ENCODE measurements at regions of chr16 and their contacts with region 1.

Region 1: GRCh38 chr16:11977376-11978041 is 975 bp downstream of the SNX29 start:
- DNase-seq: peak; percentile 71
- ATAC-seq: peak; percentile 72
- H3K4me3 ChIP-seq: peak overlapping the region; percentile 96
- H3K27ac ChIP-seq: peak overlapping the region; percentile 35; the same call in 1 of the 2 replicates
- H3K4me1 ChIP-seq: peaks cover 5% of the 10 kb centered on the region; the same call in 1 of the 2 replicates
- H3K27me3 ChIP-seq: no peaks in the 10 kb centered on the region
- CTCF ChIP-seq: no peak

Region 2: GRCh38 chr16:11915644-11916523 is 61.6 kb before region 1 on chr16 and contains the start of gene GSPT1:
- CTCF ChIA-PET with region 1: interaction called, 3 read pairs
- POLR2A ChIA-PET with region 1: no interaction called
- intact Hi-C with region 1: loop called (anchors 1 kb)
- DNase-seq: peak; percentile 96
- ATAC-seq: peak; percentile 85
- H3K4me3 ChIP-seq: peak within 1 kb of the TSS; percentile 79
- H3K27ac ChIP-seq: peak within 1 kb of the TSS; percentile 97
- H3K4me1 ChIP-seq: peaks cover 23% of the 10 kb centered on the region
- H3K27me3 ChIP-seq: no peaks in the 10 kb centered on the region
- CTCF ChIP-seq: no peak
- total RNA-seq, gene GSPT1: 67.9 and 84.0 TPM in 2 replicates

Region 3: GRCh38 chr16:12026741-12027490 is 49.4 kb after region 1 on chr16:
- CTCF ChIA-PET with region 1: no interaction called
- POLR2A ChIA-PET with region 1: no interaction called
- intact Hi-C with region 1: loop called (anchors 2 kb)
- DNase-seq: peak; percentile 81
- ATAC-seq: peak; percentile 61
- H3K4me3 ChIP-seq: peak overlapping the region; percentile 63
- H3K27ac ChIP-seq: peak overlapping the region; percentile 83
- H3K4me1 ChIP-seq: peaks cover 37% of the 10 kb centered on the region
- H3K27me3 ChIP-seq: no peaks in the 10 kb centered on the region
- CTCF ChIP-seq: no peak